Activated CD4-positive, alpha-beta T cell treated with anti-CD3 and anti-CD28 coated beads, Interleukin-2, amount 10 ng/mL, durations not matched to agents 24 days and 14 days (primary cell): ENCODE measurements at regions of chr7 and their contacts with region 1.

Region 1: GRCh38 chr7:134432296-134433152 is 26.4 kb downstream of the AKR1B1 start:
- DNase-seq: peak; percentile 91
- H3K4me3 Mint-ChIP-seq: peak overlapping the region; percentile 85
- H3K27ac Mint-ChIP-seq: peak overlapping the region; percentile 86
- H3K4me1 Mint-ChIP-seq: peaks cover 14% of the 10 kb centered on the region
- H3K27me3 Mint-ChIP-seq: peaks cover 2% of the 10 kb centered on the region

Region 2: DNA sequence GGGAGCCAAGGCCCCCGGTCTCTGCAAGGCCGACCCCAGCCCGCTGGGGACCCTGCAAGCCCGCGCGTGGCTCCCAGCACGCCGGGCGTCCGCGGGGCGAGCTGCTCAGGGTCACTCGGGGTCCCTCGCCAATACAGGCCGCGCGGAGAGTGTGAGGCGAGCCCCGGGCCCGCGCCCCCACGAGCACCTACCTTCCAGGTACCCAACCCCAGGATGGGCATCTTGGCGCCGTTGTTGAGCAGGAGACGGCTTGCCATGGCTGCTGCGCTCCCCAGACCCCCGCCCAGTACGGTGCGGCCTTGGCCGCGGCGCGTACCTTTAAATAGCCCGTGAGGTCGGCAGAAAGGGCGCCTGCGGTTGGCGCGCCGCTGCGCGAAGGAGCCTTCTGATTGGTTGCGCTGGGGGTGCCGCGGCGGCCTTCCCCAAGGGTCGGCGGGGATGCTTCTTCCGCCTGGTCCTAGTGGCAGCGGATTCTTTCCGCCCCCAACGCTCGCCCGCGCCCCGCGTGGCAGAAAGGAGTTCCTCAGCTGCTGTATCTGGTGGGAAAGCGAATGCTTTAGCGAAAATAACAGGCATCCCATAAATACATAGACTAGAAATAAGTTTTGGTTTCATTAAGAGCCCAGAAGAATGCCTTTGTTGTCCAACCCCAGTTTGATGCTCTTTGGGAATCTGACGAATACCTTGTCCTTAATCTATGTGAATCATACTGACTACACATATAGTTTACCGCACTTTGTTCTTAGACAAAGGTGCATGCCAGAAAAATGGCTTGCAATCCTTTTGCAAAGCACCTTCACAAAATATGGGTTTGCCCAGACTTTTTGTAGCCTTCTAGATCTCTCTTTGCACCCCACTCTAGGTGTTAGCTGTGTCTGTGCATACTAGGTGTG is 26.5 kb after region 1 on chr7 and contains the start of gene AKR1B1:
- intact Hi-C with region 1: loop called (anchors 1 kb)
- DNase-seq: peak; percentile 97
- H3K4me3 Mint-ChIP-seq: peak within 1 kb of the TSS; percentile 90
- H3K27ac Mint-ChIP-seq: peak within 1 kb of the TSS; percentile 83
- H3K4me1 Mint-ChIP-seq: peaks cover 39% of the 10 kb centered on the region
- H3K27me3 Mint-ChIP-seq: no peaks in the 10 kb centered on the region
- total RNA-seq, gene AKR1B1: 107 TPM in 2 replicates

Region 3: GRCh38 chr7:134514663-134515062 is 82.1 kb after region 1 on chr7:
- intact Hi-C with region 1: loop called (anchors 1 kb)
- DNase-seq: peak; percentile 84
- H3K4me3 Mint-ChIP-seq: no peak overlapping the region
- H3K27ac Mint-ChIP-seq: no peak overlapping the region
- H3K4me1 Mint-ChIP-seq: peaks cover 6% of the 10 kb centered on the region
- H3K27me3 Mint-ChIP-seq: peaks cover 20% of the 10 kb centered on the region

Region 4: DNA sequence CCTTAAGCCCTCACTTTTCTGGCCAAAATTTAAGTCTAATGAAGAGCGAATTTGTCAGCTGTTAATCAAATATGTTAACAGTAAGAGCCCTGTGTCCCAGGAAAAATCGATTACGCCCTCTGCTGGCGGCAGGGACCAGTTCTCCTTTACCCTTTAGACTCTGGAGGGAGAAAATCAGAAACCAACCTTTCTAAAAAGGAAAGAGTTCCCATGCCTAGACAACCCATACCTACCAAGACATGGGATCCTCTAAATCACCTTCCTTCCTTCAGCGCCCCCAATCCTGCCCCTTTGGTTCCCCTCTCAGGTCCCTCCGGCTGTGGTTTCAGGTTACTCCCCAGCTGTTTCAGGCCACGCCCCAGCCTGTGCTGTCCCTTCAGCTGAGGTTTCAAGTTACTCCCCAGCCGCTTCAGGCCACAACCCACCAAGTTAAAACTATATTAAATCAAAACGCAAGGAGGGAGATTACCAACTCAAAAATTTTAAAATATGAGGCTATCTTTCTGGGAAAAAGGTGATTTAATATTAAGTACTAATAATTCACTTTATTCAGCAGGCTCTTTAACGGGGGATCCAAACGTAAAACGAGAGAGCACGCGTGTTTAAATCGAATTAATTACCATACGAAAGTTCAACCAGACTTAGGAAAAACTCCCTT is 115.0 kb after region 1 on chr7:
- intact Hi-C with region 1: loop called (anchors 1 kb)
- DNase-seq: peak; percentile 88
- H3K4me3 Mint-ChIP-seq: peak overlapping the region; percentile 12
- H3K27ac Mint-ChIP-seq: no peak overlapping the region
- H3K4me1 Mint-ChIP-seq: no peaks in the 10 kb centered on the region
- H3K27me3 Mint-ChIP-seq: peaks cover 14% of the 10 kb centered on the region

Region 5: DNA sequence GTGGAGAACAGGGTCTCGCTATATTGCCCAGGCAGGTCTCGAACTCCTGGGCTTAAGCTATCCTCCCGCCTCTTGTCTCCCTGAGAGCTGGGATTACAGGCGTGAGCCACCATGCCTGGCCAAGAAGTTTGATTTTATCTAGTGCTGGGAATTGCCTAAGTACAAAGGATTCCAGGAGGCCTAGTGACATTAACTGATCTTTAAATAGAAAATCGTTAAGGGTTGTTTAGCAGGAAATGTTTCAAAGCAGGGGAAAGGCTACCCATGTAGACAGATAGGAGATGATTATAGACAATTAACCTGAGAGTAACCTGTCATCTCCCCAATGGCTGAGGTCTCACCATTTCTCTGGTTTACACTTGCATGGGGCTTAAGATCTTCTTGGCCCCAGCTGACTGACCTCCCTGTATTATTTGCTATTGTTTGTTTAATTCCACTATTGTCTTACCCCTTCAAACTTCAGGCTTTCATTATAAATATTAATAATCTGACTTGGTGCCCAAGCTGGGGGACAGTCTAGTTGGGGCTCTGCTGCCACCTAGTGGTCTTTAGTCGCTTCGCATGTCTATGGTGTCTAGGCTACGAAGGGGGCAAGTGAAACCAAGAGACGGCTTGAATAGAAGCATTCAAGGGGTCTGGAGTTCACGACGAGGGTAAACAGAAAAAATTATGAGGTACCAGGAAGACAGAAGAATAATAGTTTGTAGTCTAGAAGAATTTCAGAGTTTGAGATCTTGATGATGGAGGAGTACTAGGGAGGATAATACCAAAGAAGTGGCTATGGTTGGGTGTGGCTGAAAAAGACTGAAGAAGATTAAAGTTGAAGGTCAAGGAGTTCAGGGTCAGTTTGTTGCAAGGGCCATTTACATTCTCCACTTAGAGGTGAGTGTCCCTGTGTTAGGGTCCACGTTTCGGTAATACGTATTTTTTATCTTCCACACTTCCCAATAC is 173.7 kb after region 1 on chr7:
- intact Hi-C with region 1: loop called (anchors 1 kb)
- DNase-seq: peak; percentile 87
- H3K4me3 Mint-ChIP-seq: peak overlapping the region; percentile 59
- H3K27ac Mint-ChIP-seq: no peak overlapping the region
- H3K4me1 Mint-ChIP-seq: peaks cover 3% of the 10 kb centered on the region
- H3K27me3 Mint-ChIP-seq: peaks cover 40% of the 10 kb centered on the region

Region 6: DNA sequence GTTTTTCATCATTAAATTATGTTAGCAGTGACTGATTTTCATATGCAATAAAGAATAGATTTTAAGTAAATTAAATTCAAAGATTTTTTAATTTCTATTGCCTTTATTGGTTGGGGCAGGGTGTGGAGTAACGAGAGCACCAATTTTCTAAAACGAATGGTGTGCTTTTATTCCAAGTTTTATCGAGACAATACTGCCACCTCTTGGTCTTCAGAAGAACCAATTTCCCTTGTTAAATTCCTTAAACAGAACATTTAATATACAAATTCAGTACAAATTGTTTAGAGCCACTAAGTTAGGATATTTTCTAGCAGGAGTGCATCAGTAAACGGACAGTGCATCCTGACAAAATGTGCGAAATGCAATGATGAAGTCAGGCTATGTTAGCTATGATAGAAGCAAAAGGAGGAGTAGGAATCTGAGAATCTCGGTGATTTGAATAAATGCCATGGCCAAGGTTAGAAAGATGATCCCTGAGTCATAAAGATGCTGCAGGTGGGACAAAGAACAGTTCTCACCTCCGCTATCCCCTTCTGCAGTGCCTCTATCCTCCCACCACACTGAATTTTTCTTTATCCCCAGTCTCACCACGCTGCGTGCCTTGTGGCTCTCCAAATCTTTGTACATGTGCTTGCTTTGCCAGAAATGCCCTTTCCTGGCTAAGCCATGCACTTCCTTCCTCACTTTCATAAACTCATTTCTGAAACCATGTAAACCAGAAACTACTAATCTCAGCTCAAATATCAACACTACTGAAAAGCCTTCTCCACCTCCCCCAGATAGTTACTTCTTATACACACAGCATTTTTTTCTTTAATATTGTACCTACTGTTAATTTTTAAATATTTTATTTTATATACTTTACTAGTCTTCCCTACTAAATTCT is 521.9 kb after region 1 on chr7:
- intact Hi-C with region 1: loop called (anchors 10 kb)
- DNase-seq: no peak
- H3K4me3 Mint-ChIP-seq: no peak overlapping the region
- H3K27ac Mint-ChIP-seq: no peak overlapping the region
- H3K4me1 Mint-ChIP-seq: peaks cover 4% of the 10 kb centered on the region
- H3K27me3 Mint-ChIP-seq: no peaks in the 10 kb centered on the region

Region 7: GRCh38 chr7:134986363-134987251 is 554.1 kb after region 1 on chr7 and contains the start of gene AGBL3:
- intact Hi-C with region 1: loop called (anchors 1 kb)
- DNase-seq: peak; percentile 97
- H3K4me3 Mint-ChIP-seq: peak within 1 kb of the TSS; percentile 97
- H3K27ac Mint-ChIP-seq: peak within 1 kb of the TSS; percentile 95
- H3K4me1 Mint-ChIP-seq: peaks cover 31% of the 10 kb centered on the region
- H3K27me3 Mint-ChIP-seq: no peaks in the 10 kb centered on the region
- total RNA-seq, gene AGBL3: 2.0 and 3.4 TPM in 2 replicates